Naive thymus-derived CD4-positive, alpha-beta T cell (primary cell): ENCODE measurements at regions of chr3 and their contacts with region 1.

Region 1: DNA sequence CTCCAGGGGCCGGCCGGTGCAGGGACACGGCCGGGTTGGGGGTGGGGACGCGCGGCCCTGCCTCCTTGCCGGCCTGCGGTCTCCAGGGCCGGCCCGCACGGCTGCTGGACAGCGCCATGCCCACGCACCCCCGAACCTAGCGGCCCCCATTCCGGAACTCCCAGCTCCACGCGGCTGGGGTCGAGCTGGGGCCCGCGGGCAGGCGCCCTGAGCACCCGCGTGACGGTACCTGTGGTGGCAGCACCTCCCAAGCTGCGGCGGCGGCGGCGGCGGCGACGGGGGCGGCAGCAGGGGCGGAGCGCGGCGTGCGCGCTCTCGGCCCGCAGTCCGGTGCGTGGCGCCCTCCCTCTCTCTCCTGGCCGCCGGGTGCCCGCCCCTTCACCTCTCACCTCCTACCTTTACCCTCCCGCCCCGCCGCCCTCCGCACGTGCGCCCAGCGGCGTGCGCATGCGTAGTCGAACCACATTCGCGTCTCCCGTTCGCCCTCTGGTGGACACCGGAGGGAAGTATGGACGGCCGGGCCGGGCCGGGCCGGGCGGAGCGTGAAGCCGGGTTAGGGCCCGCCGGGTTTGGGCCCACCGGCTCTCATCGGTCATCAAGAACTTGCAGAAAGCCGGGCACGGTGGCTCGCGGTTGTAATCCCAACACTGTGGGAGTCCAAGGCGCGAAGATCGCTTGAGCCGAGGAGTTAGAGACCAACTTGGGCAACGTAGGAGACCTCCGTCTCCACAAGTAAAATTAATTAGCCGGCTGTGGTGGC is at the start of gene SCAP:
- DNase-seq: peak; percentile 93 to 99 (median 95)
- ATAC-seq: peak; percentile 97
- H3K4me3 ChIP-seq: peak within 1 kb of the TSS; percentile 69
- H3K4me3 Mint-ChIP-seq: peak within 1 kb of the TSS; percentile 89 to 98 (median 93)
- H3K27ac ChIP-seq: peak within 1 kb of the TSS; percentile 90
- H3K27ac Mint-ChIP-seq: peak within 1 kb of the TSS; percentile 86 to 96 (median 93)
- H3K4me1 ChIP-seq: peaks cover 19 to 20% of the 10 kb centered on the region in 2 donors
- H3K4me1 Mint-ChIP-seq: peaks cover 20 to 54% (median 36%) of the 10 kb centered on the region in 7 donors
- H3K27me3 ChIP-seq: no peaks in the 10 kb centered on the region
- H3K27me3 Mint-ChIP-seq: no peaks in the 10 kb centered on the region
- total RNA-seq, gene SCAP: 80.6 to 95.4 (median 92.9) TPM

Region 2: GRCh38 chr3:47164007-47164881 is 311.5 kb before region 1 on chr3 and contains the start of gene SETD2:
- CTCF ChIA-PET with region 1: no interaction called
- POLR2A ChIA-PET with region 1: no interaction called
- intact Hi-C with region 1: loop called (anchors 1 to 10 kb)
- DNase-seq: peak; percentile 67 to 86 (median 82)
- ATAC-seq: peak; percentile 92
- H3K4me3 ChIP-seq: peak within 1 kb of the TSS; percentile 77
- H3K4me3 Mint-ChIP-seq: peak within 1 kb of the TSS; percentile 90 to 99 (median 98)
- H3K27ac ChIP-seq: peak within 1 kb of the TSS; percentile 96
- H3K27ac Mint-ChIP-seq: peak within 1 kb of the TSS; percentile 94 to 99 (median 99)
- H3K4me1 ChIP-seq: peaks cover 30 to 36% of the 10 kb centered on the region in 2 donors
- H3K4me1 Mint-ChIP-seq: peaks cover 34 to 68% (median 56%) of the 10 kb centered on the region in 7 donors
- H3K27me3 ChIP-seq: no peaks in the 10 kb centered on the region
- H3K27me3 Mint-ChIP-seq: no peaks in the 10 kb centered on the region
- total RNA-seq, gene SETD2: 49.2 to 77.3 (median 71.1) TPM

Region 3: GRCh38 chr3:47380601-47381316 is 95.0 kb before region 1 on chr3 and contains the start of gene PTPN23:
- CTCF ChIA-PET with region 1: no interaction called
- POLR2A ChIA-PET with region 1: interaction called, 3 read pairs
- intact Hi-C with region 1: loop called (anchors 1 kb)
- DNase-seq: peak; percentile 96 to 99 (median 99)
- ATAC-seq: peak; percentile 82
- H3K4me3 ChIP-seq: peak within 1 kb of the TSS; percentile 86
- H3K4me3 Mint-ChIP-seq: peak within 1 kb of the TSS; percentile 90 to 100 (median 98)
- H3K27ac ChIP-seq: peak within 1 kb of the TSS; percentile 92
- H3K27ac Mint-ChIP-seq: peak within 1 kb of the TSS; percentile 92 to 100 (median 99)
- H3K4me1 ChIP-seq: peaks cover 23 to 26% of the 10 kb centered on the region in 2 donors
- H3K4me1 Mint-ChIP-seq: peaks cover 40 to 56% (median 48%) of the 10 kb centered on the region in 7 donors
- H3K27me3 ChIP-seq: no peaks in the 10 kb centered on the region
- H3K27me3 Mint-ChIP-seq: peaks cover 0 to 2% (median 0%) of the 10 kb centered on the region in 5 donors
- total RNA-seq, gene PTPN23: 35.8 to 51.2 (median 38.5) TPM

Region 4: GRCh38 chr3:47440131-47440530 is 35.6 kb before region 1 on chr3:
- CTCF ChIA-PET with region 1: interaction called, 3 read pairs
- POLR2A ChIA-PET with region 1: no interaction called
- intact Hi-C with region 1: loop called in 1 of 2 experiments (anchors 1 kb)
- DNase-seq: no peak
- ATAC-seq: no peak
- H3K4me3 ChIP-seq: no peak overlapping the region
- H3K4me3 Mint-ChIP-seq: no peak overlapping the region
- H3K27ac ChIP-seq: no peak overlapping the region
- H3K27ac Mint-ChIP-seq: peak overlapping the region in 1 of 9 donors; percentile 9
- H3K4me1 ChIP-seq: no peaks in the 10 kb centered on the region
- H3K4me1 Mint-ChIP-seq: peaks cover 2 to 18% (median 11%) of the 10 kb centered on the region in 7 donors
- H3K27me3 ChIP-seq: no peaks in the 10 kb centered on the region
- H3K27me3 Mint-ChIP-seq: no peaks in the 10 kb centered on the region

Region 5: GRCh38 chr3:47578119-47578632 is 102.4 kb after region 1 on chr3:
- CTCF ChIA-PET with region 1: no interaction called
- POLR2A ChIA-PET with region 1: no interaction called
- intact Hi-C with region 1: no loop called
- DNase-seq: peak in 8 of 9 donors; percentile 16 to 62 (median 28)
- ATAC-seq: peak; percentile 80
- H3K4me3 ChIP-seq: peak overlapping the region; percentile 41
- H3K4me3 Mint-ChIP-seq: peak overlapping the region in 9 of 10 donors; percentile 30 to 80 (median 67)
- H3K27ac ChIP-seq: no peak overlapping the region
- H3K27ac Mint-ChIP-seq: no peak overlapping the region
- H3K4me1 ChIP-seq: peaks cover 0 to 5% of the 10 kb centered on the region in 2 donors
- H3K4me1 Mint-ChIP-seq: peaks cover 0 to 9% (median 0%) of the 10 kb centered on the region in 7 donors
- H3K27me3 ChIP-seq: peaks cover 3 to 9% of the 10 kb centered on the region in 2 donors
- H3K27me3 Mint-ChIP-seq: peaks cover 13 to 57% (median 21%) of the 10 kb centered on the region in 5 donors

Region 6: GRCh38 chr3:47802734-47803477 is 327.2 kb after region 1 on chr3 and contains the start of gene DHX30:
- CTCF ChIA-PET with region 1: no interaction called
- POLR2A ChIA-PET with region 1: no interaction called
- intact Hi-C with region 1: loop called in 1 of 2 experiments (anchors 1 kb)
- DNase-seq: peak; percentile 77 to 90 (median 82)
- ATAC-seq: peak; percentile 95
- H3K4me3 ChIP-seq: peak within 1 kb of the TSS; percentile 65
- H3K4me3 Mint-ChIP-seq: peak within 1 kb of the TSS; percentile 89 to 98 (median 95)
- H3K27ac ChIP-seq: peak within 1 kb of the TSS; percentile 92
- H3K27ac Mint-ChIP-seq: peak within 1 kb of the TSS; percentile 92 to 98 (median 95)
- H3K4me1 ChIP-seq: peaks cover 11 to 12% of the 10 kb centered on the region in 2 donors
- H3K4me1 Mint-ChIP-seq: peaks cover 6 to 25% (median 20%) of the 10 kb centered on the region in 7 donors
- H3K27me3 ChIP-seq: no peaks in the 10 kb centered on the region
- H3K27me3 Mint-ChIP-seq: no peaks in the 10 kb centered on the region
- total RNA-seq, gene DHX30: 64.1 to 103 (median 92.0) TPM